Activated CD8-positive, alpha-beta T cell treated with anti-CD3 and anti-CD28 coated beads, Interleukin-2, amount 10 ng/mL, durations not matched to agents 7 days and 5 days (primary cell): ENCODE measurements at regions of chr2 and their contacts with region 1.

Region 1: DNA sequence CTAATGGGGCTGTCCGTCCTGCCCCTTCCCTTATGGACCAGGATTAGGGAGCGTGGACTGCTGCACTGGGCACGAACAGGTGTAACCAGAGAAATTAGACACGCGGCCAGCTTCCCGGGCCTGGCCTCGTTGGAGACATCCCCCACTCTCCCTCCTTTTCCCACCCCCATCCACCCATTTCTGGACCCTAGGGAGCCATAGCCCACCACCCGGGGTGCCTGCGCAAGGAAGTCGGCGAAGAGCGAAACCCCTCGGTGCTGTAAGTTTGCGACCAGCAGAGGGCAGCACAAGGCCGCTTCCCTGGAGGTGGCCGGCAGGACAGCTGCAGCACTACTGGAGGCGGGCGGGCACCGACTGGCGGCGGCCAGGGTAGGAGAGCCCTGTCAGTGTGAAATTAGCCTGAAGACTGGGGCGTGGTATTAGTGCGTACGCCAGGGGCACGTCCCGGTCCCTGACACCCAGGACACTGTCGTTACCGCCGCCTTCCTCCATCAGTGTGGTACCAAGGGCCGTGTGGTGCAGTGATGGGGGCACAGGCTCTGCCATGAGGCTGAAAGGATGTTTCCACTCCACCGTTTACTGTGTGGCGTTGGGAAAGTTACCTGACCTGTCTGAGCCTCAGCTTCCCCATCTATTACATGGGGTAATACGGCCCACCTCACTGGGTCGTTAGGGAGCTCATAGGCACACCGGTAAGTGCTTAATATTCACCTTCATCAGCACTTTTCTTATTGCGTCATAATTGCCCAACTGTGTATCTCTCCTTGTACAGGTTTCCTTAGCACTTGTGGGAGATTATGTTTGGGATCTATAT is 36.0 kb upstream of the CD207 start:
- DNase-seq: peak; percentile 87
- ATAC-seq: peak; percentile 95
- H3K4me3 Mint-ChIP-seq: no peak overlapping the region
- H3K27ac Mint-ChIP-seq: no peak overlapping the region
- H3K4me1 Mint-ChIP-seq: peaks cover 4% of the 10 kb centered on the region
- H3K27me3 Mint-ChIP-seq: peaks cover 24% of the 10 kb centered on the region

Region 2: GRCh38 chr2:70851704-70852103 is 19.9 kb before region 1 on chr2:
- CTCF ChIA-PET with region 1: interaction called, 25 read pairs
- POLR2A ChIA-PET with region 1: no interaction called
- DNase-seq: peak; percentile 55
- ATAC-seq: peak; percentile 99
- H3K4me3 Mint-ChIP-seq: peak overlapping the region; percentile 26
- H3K27ac Mint-ChIP-seq: peak overlapping the region; percentile 78
- H3K4me1 Mint-ChIP-seq: peaks cover 31% of the 10 kb centered on the region
- H3K27me3 Mint-ChIP-seq: peaks cover 3% of the 10 kb centered on the region

Region 3: GRCh38 chr2:70887550-70888246 is 16.1 kb after region 1 on chr2:
- CTCF ChIA-PET with region 1: interaction called, 10 read pairs
- POLR2A ChIA-PET with region 1: no interaction called
- DNase-seq: peak; percentile 55
- ATAC-seq: peak; percentile 53
- H3K4me3 Mint-ChIP-seq: peak overlapping the region; percentile 68
- H3K27ac Mint-ChIP-seq: peak overlapping the region; percentile 26
- H3K4me1 Mint-ChIP-seq: peaks cover 27% of the 10 kb centered on the region
- H3K27me3 Mint-ChIP-seq: peaks cover 86% of the 10 kb centered on the region

Region 4: GRCh38 chr2:70919672-70920366 is 48.2 kb after region 1 on chr2:
- CTCF ChIA-PET with region 1: interaction called, 102 read pairs
- POLR2A ChIA-PET with region 1: no interaction called
- DNase-seq: peak; percentile 79
- ATAC-seq: peak; percentile 70
- H3K4me3 Mint-ChIP-seq: no peak overlapping the region
- H3K27ac Mint-ChIP-seq: no peak overlapping the region
- H3K4me1 Mint-ChIP-seq: no peaks in the 10 kb centered on the region
- H3K27me3 Mint-ChIP-seq: peaks cover 11% of the 10 kb centered on the region

Region 5: GRCh38 chr2:71008342-71008741 is 136.7 kb after region 1 on chr2:
- CTCF ChIA-PET with region 1: no interaction called
- POLR2A ChIA-PET with region 1: no interaction called
- DNase-seq: no peak
- ATAC-seq: no peak
- H3K4me3 Mint-ChIP-seq: no peak overlapping the region
- H3K27ac Mint-ChIP-seq: no peak overlapping the region
- H3K4me1 Mint-ChIP-seq: no peaks in the 10 kb centered on the region
- H3K27me3 Mint-ChIP-seq: peaks cover 13% of the 10 kb centered on the region